Right ventricle myocardium inferior (tissue), 1 donor: ENCODE measurements at regions of chr11 and their contacts with region 1.

Region 1: GRCh38 chr11:68383976-68384501 is 71.6 kb downstream of the LRP5 start:
- DNase-seq: no peak
- ATAC-seq: peak; percentile 24

Region 2: DNA sequence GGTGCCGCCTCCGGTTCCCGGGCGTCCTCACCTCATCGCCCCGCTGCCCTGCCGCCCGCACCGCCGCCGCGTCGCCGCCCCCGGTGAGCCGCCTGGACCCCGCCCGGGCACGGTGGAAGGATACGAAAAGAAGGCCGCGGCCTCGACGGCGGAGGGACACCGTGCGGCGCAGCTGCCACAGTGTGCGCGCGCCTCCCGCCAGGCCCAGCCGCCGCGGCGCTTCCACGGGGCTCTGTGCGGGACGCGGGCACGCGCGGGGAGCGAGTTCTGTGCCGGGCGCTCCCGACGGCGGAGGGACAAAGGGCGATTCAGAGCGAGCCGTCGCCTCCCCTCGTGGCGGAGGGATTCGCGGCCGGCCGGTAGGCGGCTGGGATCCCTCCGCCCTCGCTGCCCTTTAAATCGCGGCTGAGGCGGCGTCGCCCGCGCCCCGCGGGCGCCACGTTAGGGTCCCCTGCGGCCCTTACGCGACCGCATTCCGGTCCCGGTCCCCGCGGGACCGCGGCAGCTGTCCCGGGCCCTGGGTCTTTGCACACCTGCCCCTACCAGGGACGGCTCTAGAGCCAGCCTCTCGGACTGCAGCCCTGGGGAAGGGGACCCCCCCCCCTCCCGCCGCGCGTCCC is 170.4 kb before region 1 on chr11:
- intact Hi-C with region 1: loop called (anchors 5 kb)
- DNase-seq: peak; percentile 94
- ATAC-seq: peak; percentile 62

Region 3: GRCh38 chr11:68257475-68258362 is 126.3 kb before region 1 on chr11:
- intact Hi-C with region 1: loop called (anchors 1 kb)
- DNase-seq: peak; percentile 98
- ATAC-seq: peak; percentile 84

Region 4: GRCh38 chr11:68271781-68272608 is 112.0 kb before region 1 on chr11 and contains the start of gene C11orf24:
- intact Hi-C with region 1: loop called (anchors 5 kb)
- DNase-seq: peak; percentile 98
- ATAC-seq: peak; percentile 97
- total RNA-seq, gene C11orf24: 29.4 TPM

Region 5: GRCh38 chr11:68312117-68312779 is 71.8 kb before region 1 on chr11 and contains the start of gene LRP5:
- intact Hi-C with region 1: loop called (anchors 1 kb)
- DNase-seq: peak; percentile 59
- ATAC-seq: peak; percentile 24
- total RNA-seq, gene LRP5: 61.6 TPM

Region 6: DNA sequence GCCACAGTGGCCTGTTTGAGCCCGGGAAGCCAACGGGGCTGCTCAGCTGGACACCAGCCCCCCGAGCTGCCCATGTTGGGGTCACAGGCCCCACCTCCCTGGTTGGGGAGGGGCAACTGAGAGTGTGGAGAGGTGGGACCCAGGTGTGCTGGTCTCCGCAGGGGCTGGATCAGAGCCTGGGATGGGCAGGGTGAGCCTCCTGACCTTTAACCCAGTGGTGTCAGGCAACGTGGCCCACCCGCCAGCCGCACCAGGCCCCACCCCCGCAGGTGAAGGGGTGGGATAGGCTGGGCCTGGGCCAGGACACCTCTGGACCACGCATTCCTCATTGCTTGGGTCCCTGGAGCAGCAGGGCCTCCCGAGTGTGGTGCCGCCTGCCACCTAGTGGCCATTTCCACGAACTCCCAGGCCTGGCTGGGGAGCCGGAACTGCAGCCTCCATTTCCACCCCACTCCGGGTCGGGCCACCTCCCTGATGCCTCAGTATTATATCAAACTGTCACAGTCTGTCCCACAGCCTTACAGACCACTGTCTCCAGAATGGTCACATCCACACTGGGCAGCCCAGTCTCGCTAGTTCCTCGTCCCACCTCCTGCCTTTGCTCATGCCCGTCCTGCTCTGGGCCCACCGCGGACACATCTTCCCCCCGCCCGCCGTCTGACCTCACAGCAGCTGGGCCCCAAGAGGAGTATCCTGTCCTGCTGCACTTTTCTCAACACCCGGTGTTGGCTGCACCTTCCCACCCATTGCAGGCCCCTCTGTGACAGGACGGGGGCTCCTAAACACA is 63.2 kb after region 1 on chr11:
- intact Hi-C with region 1: loop called (anchors 5 kb)
- DNase-seq: peak; percentile 87
- ATAC-seq: peak; percentile 91